Dendritic cell treated with granulocyte-macrophage colony-stimulating factor and Interleukin-4, amounts not matched to agents 40 ng/mL and 50 ng/mL, for 4 days (primary cell): ENCODE measurements at regions of chr20 and their contacts with region 1.

Region 1: DNA sequence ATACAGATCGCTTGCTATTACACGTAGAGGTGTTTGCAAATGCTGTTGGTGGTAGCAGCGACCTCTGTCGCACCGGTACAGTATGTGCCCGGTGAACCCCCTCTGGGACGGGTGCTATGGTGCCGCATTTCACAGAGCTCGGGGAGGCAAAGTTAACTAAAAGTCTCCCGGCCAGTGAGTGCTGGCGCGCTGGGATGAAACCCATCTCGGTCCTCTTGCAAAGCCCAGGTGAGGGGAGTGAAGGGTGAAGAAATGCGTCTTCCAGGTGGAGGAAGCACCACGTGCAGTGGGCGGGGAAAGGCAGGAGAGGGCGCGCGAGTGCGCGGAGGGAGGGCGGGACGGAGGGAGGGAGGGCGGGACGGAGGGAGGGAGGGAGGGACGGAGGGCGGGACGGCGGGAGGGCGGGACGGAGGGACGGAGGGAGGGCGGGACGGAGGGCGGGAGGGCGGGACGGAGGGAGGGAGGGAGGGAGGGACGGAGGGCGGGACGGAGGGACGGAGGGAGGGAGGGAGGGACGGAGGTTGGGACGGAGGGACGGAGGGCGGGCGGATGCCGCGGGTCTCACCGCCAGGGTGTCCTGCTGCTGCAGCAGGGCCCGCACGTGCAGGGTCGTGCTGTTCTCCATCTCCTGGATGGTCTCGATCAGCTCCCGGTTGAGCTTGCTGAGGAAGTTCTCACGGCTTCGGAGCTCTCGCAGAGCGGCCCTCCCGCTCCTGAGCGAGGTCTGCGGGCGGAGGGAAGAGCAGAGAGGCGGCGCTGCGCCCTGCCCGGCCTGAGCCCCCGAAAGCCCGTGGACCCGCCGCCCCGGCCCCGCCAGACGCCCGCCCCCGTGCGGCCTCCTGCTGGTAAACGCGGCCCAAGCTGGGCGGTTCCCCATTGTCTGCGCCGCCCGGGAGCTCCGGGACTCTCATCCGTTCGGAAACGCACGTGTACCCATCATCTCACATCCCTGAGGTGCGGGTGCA is 11.7 kb downstream of the C20orf96 start:
- H3K4me3 Mint-ChIP-seq: peak overlapping the region; percentile 35
- H3K27ac Mint-ChIP-seq: no peak overlapping the region
- H3K4me1 Mint-ChIP-seq: peaks cover 5% of the 10 kb centered on the region
- H3K27me3 Mint-ChIP-seq: no peaks in the 10 kb centered on the region

Region 2: GRCh38 chr20:330233-331149 is 51.6 kb after region 1 on chr20:
- intact Hi-C with region 1: loop called (anchors 10 kb)
- H3K4me3 Mint-ChIP-seq: no peak overlapping the region
- H3K27ac Mint-ChIP-seq: no peak overlapping the region
- H3K4me1 Mint-ChIP-seq: peaks cover 58% of the 10 kb centered on the region
- H3K27me3 Mint-ChIP-seq: peaks cover 21% of the 10 kb centered on the region